Activated CD8-positive, alpha-beta T cell treated with anti-CD3 and anti-CD28 coated beads for 36 hours (primary cell): ENCODE measurements at regions of chr11 and their contacts with region 1.

Region 1: GRCh38 chr11:16820324-16821092 is 82.1 kb downstream of the C11orf58 start:
- DNase-seq: peak; percentile 91
- ATAC-seq: peak; percentile 90
- H3K4me3 Mint-ChIP-seq: no peak overlapping the region
- H3K27ac Mint-ChIP-seq: no peak overlapping the region
- H3K4me1 Mint-ChIP-seq: peaks cover 4% of the 10 kb centered on the region
- H3K27me3 Mint-ChIP-seq: peaks cover 3% of the 10 kb centered on the region
- CTCF ChIP-seq: peak; percentile 83

Region 2: DNA sequence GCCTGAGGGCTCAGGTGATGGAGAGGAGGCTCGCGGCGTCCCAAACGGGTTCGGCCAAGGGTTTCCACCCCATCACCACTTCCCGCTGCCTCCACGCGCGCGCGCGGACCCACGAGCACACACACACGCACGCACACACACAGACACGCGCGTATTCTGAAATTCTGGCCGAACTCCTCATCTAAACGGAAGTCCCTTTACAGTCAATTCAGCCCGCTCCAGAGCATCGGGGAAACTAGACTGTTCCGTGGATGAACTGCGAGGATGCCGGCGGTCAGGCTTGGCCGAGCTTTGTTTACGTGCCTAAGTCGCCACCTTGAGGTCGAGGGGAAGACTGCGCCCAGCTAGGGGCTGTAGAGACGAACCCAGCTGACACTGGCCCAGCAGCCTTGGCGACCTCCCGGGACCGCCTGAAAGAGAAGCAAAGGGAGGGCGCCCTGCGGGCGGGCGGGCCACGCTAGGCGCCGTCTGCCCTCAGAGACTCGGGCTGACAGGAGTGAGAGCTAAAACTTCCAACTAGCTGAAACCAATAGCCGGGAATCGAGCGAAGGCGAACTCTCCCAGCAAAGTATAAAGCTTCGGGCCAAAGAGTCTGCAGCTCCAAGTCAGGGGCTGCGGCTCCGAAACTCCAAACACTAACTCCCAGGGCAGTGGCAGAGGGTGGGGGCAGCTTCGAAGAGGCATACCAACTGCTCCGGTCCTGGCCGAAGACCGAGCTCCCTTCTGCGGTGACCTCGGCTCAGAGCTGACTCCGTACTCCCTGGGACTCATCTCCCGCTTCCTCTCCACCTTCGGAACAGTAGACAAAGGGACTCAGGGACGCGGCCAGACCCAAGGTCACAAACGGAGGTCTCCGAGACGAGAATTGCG is 206.8 kb before region 1 on chr11:
- CTCF ChIA-PET with region 1: no interaction called
- POLR2A ChIA-PET with region 1: no interaction called
- intact Hi-C with region 1: no loop called
- DNase-seq: peak; percentile 84
- ATAC-seq: peak; percentile 97
- H3K4me3 Mint-ChIP-seq: peak overlapping the region; percentile 55
- H3K27ac Mint-ChIP-seq: no peak overlapping the region
- H3K4me1 Mint-ChIP-seq: peaks cover 16% of the 10 kb centered on the region
- H3K27me3 Mint-ChIP-seq: peaks cover 51% of the 10 kb centered on the region
- CTCF ChIP-seq: peak; percentile 76

Region 3: GRCh38 chr11:16669799-16670415 is 150.6 kb before region 1 on chr11:
- CTCF ChIA-PET with region 1: no interaction called
- POLR2A ChIA-PET with region 1: no interaction called
- intact Hi-C with region 1: no loop called
- DNase-seq: no peak
- ATAC-seq: no peak
- H3K4me3 Mint-ChIP-seq: no peak overlapping the region
- H3K27ac Mint-ChIP-seq: no peak overlapping the region
- H3K4me1 Mint-ChIP-seq: no peaks in the 10 kb centered on the region
- H3K27me3 Mint-ChIP-seq: peaks cover 6% of the 10 kb centered on the region
- CTCF ChIP-seq: no peak

Region 4: DNA sequence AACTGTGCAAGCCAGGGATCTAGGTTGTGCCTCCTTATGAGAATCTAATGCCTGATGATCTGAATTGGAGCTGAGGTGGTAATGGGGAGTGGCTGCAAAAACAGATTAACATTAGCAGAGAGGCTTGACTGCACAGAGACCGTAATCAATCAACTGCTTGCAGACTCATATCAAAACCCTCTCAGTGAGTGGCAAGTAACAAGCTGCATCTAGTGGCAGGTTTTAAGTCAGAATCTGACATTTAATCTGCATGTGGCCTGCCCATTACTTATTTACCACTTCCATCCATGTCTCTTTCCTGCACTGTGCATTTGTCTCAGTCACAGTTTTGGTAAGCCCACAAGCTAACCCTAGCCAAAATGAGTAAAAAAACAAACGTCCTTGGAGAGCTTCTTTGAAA is 70.8 kb before region 1 on chr11:
- CTCF ChIA-PET with region 1: no interaction called
- POLR2A ChIA-PET with region 1: no interaction called
- intact Hi-C with region 1: no loop called
- DNase-seq: peak; percentile 33
- ATAC-seq: peak; percentile 82
- H3K4me3 Mint-ChIP-seq: no peak overlapping the region
- H3K27ac Mint-ChIP-seq: peak overlapping the region; percentile 71
- H3K4me1 Mint-ChIP-seq: peaks cover 46% of the 10 kb centered on the region
- H3K27me3 Mint-ChIP-seq: no peaks in the 10 kb centered on the region
- CTCF ChIP-seq: no peak

Region 5: DNA sequence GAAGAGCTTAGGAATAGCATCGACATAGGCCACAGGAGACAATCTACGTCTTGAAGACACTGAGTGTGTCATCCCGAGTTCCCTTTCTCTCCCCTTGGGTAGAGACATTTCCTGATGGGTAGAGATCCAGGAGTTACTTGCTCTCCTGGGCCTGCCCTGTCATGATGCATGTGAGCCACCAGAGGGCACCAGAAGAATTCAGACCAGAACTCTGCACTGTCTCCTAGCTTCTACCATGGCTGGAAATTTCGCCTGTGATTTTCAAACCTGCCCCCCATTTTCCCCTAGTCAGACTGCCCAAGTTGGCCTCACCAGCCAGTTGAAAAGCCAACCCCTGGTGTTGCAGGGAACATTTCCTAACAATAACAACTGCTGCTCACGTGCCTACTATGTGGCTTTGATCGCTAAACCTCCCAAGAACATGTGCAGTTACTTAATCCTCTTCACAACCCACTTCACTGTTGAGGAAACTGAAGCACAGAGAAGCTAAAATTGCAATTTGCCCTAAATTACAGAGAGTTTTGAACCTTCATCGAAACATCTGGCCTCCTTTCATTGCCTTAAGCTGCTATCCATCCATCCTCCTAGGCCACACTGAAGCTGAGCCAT is 34.9 kb before region 1 on chr11:
- CTCF ChIA-PET with region 1: interaction called, 21 read pairs
- POLR2A ChIA-PET with region 1: no interaction called
- intact Hi-C with region 1: no loop called
- DNase-seq: peak; percentile 73
- ATAC-seq: peak; percentile 89
- H3K4me3 Mint-ChIP-seq: no peak overlapping the region
- H3K27ac Mint-ChIP-seq: no peak overlapping the region
- H3K4me1 Mint-ChIP-seq: no peaks in the 10 kb centered on the region
- H3K27me3 Mint-ChIP-seq: no peaks in the 10 kb centered on the region
- CTCF ChIP-seq: peak; percentile 72

Region 6: GRCh38 chr11:16804104-16804947 is 16.2 kb before region 1 on chr11:
- CTCF ChIA-PET with region 1: interaction called, 34 read pairs
- POLR2A ChIA-PET with region 1: interaction called, 3 read pairs
- intact Hi-C with region 1: no loop called
- DNase-seq: no peak
- ATAC-seq: no peak
- H3K4me3 Mint-ChIP-seq: no peak overlapping the region
- H3K27ac Mint-ChIP-seq: peak overlapping the region; percentile 30
- H3K4me1 Mint-ChIP-seq: peaks cover 6% of the 10 kb centered on the region
- H3K27me3 Mint-ChIP-seq: no peaks in the 10 kb centered on the region
- CTCF ChIP-seq: no peak

Region 7: GRCh38 chr11:16831316-16832192 is 11.0 kb after region 1 on chr11:
- CTCF ChIA-PET with region 1: interaction called, 45 read pairs
- POLR2A ChIA-PET with region 1: no interaction called
- intact Hi-C with region 1: no loop called
- DNase-seq: no peak
- ATAC-seq: no peak
- H3K4me3 Mint-ChIP-seq: no peak overlapping the region
- H3K27ac Mint-ChIP-seq: no peak overlapping the region
- H3K4me1 Mint-ChIP-seq: peaks cover 9% of the 10 kb centered on the region
- H3K27me3 Mint-ChIP-seq: no peaks in the 10 kb centered on the region
- CTCF ChIP-seq: no peak

Region 8: GRCh38 chr11:16917941-16918340 is 97.4 kb after region 1 on chr11:
- CTCF ChIA-PET with region 1: interaction called, 21 read pairs
- POLR2A ChIA-PET with region 1: no interaction called
- intact Hi-C with region 1: no loop called
- DNase-seq: no peak
- ATAC-seq: no peak
- H3K4me3 Mint-ChIP-seq: no peak overlapping the region
- H3K27ac Mint-ChIP-seq: no peak overlapping the region
- H3K4me1 Mint-ChIP-seq: peaks cover 2% of the 10 kb centered on the region
- H3K27me3 Mint-ChIP-seq: peaks cover 18% of the 10 kb centered on the region
- CTCF ChIP-seq: no peak

Region 9: GRCh38 chr11:16935518-16936302 is 115.2 kb after region 1 on chr11:
- CTCF ChIA-PET with region 1: interaction called, 26 read pairs
- POLR2A ChIA-PET with region 1: no interaction called
- intact Hi-C with region 1: no loop called
- DNase-seq: peak; percentile 57
- ATAC-seq: peak; percentile 80
- H3K4me3 Mint-ChIP-seq: no peak overlapping the region
- H3K27ac Mint-ChIP-seq: no peak overlapping the region
- H3K4me1 Mint-ChIP-seq: no peaks in the 10 kb centered on the region
- H3K27me3 Mint-ChIP-seq: peaks cover 16% of the 10 kb centered on the region
- CTCF ChIP-seq: peak; percentile 65

Region 10: DNA sequence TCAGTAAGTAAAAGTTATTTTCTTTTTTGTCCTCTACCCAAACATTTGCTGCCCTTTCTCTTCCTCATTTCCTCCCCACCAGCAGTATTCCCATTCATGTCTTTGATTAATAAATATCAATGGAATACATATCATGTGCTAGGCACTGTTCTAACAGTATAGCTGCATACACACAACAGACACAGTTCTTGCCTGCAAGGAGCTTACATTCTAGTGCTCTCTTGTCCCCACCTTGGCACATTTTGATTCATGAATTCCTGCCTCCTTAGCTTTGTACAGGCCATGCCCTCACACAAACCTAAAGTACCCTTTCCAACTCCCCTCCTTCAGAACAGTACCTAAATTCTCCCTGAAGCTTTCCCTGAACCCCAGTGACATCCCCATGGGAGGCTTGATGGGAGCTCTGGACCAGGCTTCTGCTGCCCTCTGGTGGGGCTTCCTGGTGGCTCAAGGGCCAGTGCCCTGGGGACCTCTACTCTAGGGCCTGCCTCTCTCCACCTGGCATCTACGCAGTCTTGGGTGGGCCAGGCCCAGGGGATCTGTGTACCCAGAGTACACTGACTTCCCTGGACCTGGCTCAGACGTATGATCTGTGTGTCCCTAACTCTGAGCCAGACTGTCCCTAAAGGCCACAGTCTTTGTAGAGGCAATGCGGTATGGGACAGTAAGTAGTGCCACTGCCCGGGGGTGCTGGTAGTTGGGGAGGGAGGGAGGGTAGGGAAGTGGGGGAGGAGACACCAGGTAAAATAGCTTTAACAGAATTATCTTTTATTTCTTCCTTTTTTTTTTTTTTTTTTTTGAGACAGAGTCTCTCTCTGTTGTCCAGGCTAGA is 242.9 kb after region 1 on chr11:
- CTCF ChIA-PET with region 1: interaction called, 44 read pairs
- POLR2A ChIA-PET with region 1: no interaction called
- intact Hi-C with region 1: loop called (anchors 5 kb)
- DNase-seq: peak; percentile 77
- ATAC-seq: peak; percentile 90
- H3K4me3 Mint-ChIP-seq: no peak overlapping the region
- H3K27ac Mint-ChIP-seq: no peak overlapping the region
- H3K4me1 Mint-ChIP-seq: no peaks in the 10 kb centered on the region
- H3K27me3 Mint-ChIP-seq: no peaks in the 10 kb centered on the region
- CTCF ChIP-seq: peak; percentile 85